ENCODE measurements at regions of chr9 and their contacts with region 1.

Region 1: DNA sequence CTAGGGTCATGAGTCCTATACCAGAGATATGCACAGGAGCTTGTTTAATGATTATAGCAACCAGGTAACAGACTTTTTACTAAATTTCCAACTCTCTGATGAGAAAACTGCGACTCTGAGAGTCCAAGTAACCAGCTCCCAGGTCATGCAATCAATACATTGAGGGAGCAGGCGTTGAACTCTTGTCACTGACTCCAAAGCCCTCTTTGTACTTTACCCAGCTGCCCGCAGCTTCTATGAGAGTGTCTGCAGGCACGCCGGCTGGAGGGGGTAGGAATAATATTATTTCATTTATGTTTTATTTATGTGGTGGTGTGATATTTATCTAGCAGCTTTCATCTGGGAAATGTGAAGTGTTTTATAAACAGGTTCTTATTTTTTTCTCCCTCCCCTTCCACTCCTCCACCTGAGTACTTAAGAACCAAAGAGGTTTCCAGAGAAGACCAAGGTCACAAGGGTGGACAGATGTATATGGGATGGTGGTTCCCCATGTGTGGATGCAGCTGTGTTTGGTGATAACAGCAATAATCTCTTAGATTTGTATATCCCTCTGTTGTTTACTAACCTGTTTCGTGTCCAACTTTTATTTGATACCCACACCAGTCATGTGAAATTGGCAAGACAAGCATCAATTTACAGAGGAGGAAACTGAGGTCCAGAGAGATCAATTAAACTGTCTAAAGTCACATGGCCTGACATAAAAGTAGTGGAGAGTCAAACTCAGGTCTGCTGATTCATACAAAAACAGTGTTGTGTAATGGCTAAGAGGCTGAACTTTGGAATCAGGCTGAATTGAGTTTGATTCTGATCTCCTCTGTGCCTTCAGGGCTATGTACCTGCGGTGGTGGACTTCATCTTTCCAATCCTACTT is 140.2 kb upstream of the TRIM32 start:
- DNase-seq: peak; percentile 40 to 42
- H3K4me3 ChIP-seq: no peak overlapping the region
- H3K4me3 Mint-ChIP-seq: peak overlapping the region; percentile 27
- H3K27ac Mint-ChIP-seq: peak overlapping the region; percentile 80
- H3K4me1 ChIP-seq: peaks cover 26% of the 10 kb centered on the region
- H3K4me1 Mint-ChIP-seq: peaks cover 19% of the 10 kb centered on the region
- H3K27me3 ChIP-seq: no peaks in the 10 kb centered on the region
- H3K27me3 Mint-ChIP-seq: no peaks in the 10 kb centered on the region
- CTCF ChIP-seq: no peak

Region 2: GRCh38 chr9:116504893-116505480 is 42.0 kb before region 1 on chr9:
- CTCF ChIA-PET with region 1: no interaction called
- POLR2A ChIA-PET with region 1: no interaction called
- intact Hi-C with region 1: loop called (anchors 1 kb)
- DNase-seq: peak in 1 of 2 experiments; percentile 3
- H3K4me3 ChIP-seq: no peak overlapping the region
- H3K4me3 Mint-ChIP-seq: no peak overlapping the region
- H3K27ac Mint-ChIP-seq: no peak overlapping the region
- H3K4me1 ChIP-seq: peaks cover 20% of the 10 kb centered on the region
- H3K4me1 Mint-ChIP-seq: peaks cover 27% of the 10 kb centered on the region
- H3K27me3 ChIP-seq: no peaks in the 10 kb centered on the region
- H3K27me3 Mint-ChIP-seq: no peaks in the 10 kb centered on the region
- CTCF ChIP-seq: no peak

Region 3: DNA sequence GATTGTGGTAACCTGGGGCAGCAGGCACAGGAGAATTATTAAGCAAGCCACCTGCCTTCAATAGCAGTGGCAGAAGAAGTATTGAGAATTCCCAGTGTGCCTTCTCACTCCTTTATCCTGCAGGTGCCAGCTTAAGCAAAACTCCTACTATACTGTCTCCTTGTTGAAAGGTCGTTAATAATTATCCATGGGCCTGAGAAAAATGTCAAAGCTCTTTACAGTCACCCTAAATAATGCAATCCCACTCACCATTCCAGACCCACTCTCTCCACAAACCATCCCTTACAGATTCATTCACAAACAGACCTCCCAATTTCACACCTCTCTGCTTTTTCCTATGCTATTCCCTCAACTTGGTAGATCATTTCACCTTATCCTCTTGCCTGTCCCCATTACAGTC is 21.3 kb before region 1 on chr9:
- CTCF ChIA-PET with region 1: no interaction called
- POLR2A ChIA-PET with region 1: no interaction called
- intact Hi-C with region 1: no loop called
- DNase-seq: no peak
- H3K4me3 ChIP-seq: no peak overlapping the region
- H3K4me3 Mint-ChIP-seq: no peak overlapping the region
- H3K27ac Mint-ChIP-seq: no peak overlapping the region
- H3K4me1 ChIP-seq: peaks cover 22% of the 10 kb centered on the region
- H3K4me1 Mint-ChIP-seq: peaks cover 16% of the 10 kb centered on the region
- H3K27me3 ChIP-seq: no peaks in the 10 kb centered on the region
- H3K27me3 Mint-ChIP-seq: no peaks in the 10 kb centered on the region
- CTCF ChIP-seq: no peak

Region 4: DNA sequence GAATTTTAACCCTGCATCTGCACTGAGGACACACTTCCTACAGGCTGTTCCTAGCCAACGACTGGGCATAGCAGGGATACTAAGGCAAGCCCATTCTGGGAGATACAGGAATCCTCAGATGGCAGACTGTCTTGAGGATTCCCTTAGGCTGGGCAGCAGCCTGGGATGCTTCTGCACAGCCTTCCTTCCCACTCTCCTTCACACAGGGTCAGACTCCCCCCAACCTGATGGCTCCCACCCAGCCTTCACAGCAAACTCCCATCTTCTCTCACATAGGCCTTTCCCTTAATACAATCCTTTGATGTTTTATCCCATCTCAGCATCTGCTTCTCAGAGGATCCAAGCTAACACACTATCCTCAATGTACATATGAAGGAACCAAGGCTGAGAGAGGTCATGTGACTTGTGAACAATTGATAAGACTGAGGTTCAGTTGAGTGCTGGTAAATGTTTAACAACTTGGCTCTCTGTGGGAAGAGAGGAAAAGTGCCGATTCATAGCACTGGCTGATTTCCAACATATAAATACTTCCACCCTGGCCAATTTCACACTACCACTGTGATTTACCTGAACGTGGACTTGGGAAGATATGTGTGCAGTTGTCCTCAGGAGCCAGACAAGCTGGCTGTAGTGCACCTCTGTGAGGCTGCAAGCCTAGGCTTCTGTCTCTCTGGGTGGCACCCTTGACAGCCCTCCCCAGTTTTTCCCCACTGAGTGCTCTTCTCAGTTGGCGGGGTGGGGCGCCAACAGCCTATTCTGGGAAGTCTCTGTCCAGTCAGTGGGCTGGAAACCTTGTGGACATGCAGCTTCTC is 19.9 kb after region 1 on chr9:
- CTCF ChIA-PET with region 1: no interaction called
- POLR2A ChIA-PET with region 1: no interaction called
- intact Hi-C with region 1: loop called (anchors 1 kb)
- DNase-seq: peak; percentile 48 to 63
- H3K4me3 ChIP-seq: no peak overlapping the region
- H3K4me3 Mint-ChIP-seq: peak overlapping the region; percentile 12
- H3K27ac Mint-ChIP-seq: peak overlapping the region; percentile 81
- H3K4me1 ChIP-seq: peaks cover 32% of the 10 kb centered on the region
- H3K4me1 Mint-ChIP-seq: peaks cover 13% of the 10 kb centered on the region
- H3K27me3 ChIP-seq: no peaks in the 10 kb centered on the region
- H3K27me3 Mint-ChIP-seq: no peaks in the 10 kb centered on the region
- CTCF ChIP-seq: no peak